ENCODE measurements at regions of chr1 and their contacts with region 1.

Region 1: DNA sequence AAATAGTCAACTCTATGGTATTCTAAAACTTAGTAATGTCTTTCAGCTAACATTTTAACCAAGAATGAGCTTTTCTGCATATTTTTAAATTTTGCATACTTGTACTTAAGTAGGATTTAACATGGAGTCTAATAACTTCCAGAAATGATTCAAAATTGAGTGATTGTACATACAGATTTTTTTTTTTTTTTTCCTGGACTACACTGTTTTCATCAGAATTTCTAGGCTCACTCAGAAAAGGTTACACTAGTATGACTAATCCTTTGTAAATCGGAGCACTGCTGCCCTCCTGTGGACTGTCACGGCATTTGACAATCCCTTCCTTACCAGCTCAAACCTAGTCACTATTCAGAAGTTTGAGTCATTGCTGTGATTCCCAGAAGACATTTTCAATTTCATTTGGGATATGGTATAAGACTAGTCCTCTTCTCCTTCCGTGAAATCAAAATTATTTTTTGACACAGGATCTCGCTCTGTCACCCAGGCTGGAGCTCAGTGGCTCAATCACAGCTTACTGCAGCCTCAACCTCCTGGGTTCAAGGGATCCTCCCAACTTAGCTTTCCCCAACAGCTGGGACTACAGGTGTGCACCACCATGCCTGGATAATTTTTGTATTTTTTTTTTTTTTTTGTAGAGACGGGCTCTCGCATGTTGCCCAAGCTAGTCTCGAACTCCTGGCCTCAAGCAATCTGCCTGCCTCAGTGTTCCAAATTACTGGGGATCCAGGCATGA is 45.5 kb downstream of the CD46 start:
- DNase-seq: peak; percentile 81
- ATAC-seq: peak; percentile 84
- H3K4me3 Mint-ChIP-seq: no peak overlapping the region
- H3K27ac Mint-ChIP-seq: no peak overlapping the region
- H3K4me1 Mint-ChIP-seq: peaks cover 8% of the 10 kb centered on the region
- H3K27me3 Mint-ChIP-seq: no peaks in the 10 kb centered on the region
- CTCF ChIP-seq: peak; percentile 46

Region 2: GRCh38 chr1:207698822-207699483 is 98.4 kb before region 1 on chr1:
- CTCF ChIA-PET with region 1: interaction called, 16 read pairs
- POLR2A ChIA-PET with region 1: no interaction called
- DNase-seq: peak; percentile 61
- ATAC-seq: peak; percentile 91
- H3K4me3 Mint-ChIP-seq: no peak overlapping the region
- H3K27ac Mint-ChIP-seq: peak overlapping the region; percentile 46
- H3K4me1 Mint-ChIP-seq: peaks cover 11% of the 10 kb centered on the region
- H3K27me3 Mint-ChIP-seq: no peaks in the 10 kb centered on the region
- CTCF ChIP-seq: no peak; the same call in 1 of the 2 replicates

Region 3: GRCh38 chr1:207711285-207711684 is 86.1 kb before region 1 on chr1:
- CTCF ChIA-PET with region 1: interaction called, 12 read pairs
- POLR2A ChIA-PET with region 1: no interaction called
- DNase-seq: peak; percentile 22
- ATAC-seq: peak; percentile 87
- H3K4me3 Mint-ChIP-seq: no peak overlapping the region
- H3K27ac Mint-ChIP-seq: 0 out of 2 replicates have a peak overlapping the region, but pooled peaks have one; percentile 6
- H3K4me1 Mint-ChIP-seq: peaks cover 16% of the 10 kb centered on the region
- H3K27me3 Mint-ChIP-seq: no peaks in the 10 kb centered on the region
- CTCF ChIP-seq: no peak

Region 4: GRCh38 chr1:207811920-207812720 is 14.7 kb after region 1 on chr1:
- CTCF ChIA-PET with region 1: interaction called, 15 read pairs
- POLR2A ChIA-PET with region 1: no interaction called
- DNase-seq: peak; percentile 55
- ATAC-seq: peak; percentile 88
- H3K4me3 Mint-ChIP-seq: no peak overlapping the region
- H3K27ac Mint-ChIP-seq: no peak overlapping the region
- H3K4me1 Mint-ChIP-seq: peaks cover 10% of the 10 kb centered on the region
- H3K27me3 Mint-ChIP-seq: no peaks in the 10 kb centered on the region
- CTCF ChIP-seq: no peak

Region 5: GRCh38 chr1:207822602-207823451 is 25.4 kb after region 1 on chr1:
- CTCF ChIA-PET with region 1: interaction called, 11 read pairs
- POLR2A ChIA-PET with region 1: no interaction called
- DNase-seq: no peak
- ATAC-seq: peak; percentile 62
- H3K4me3 Mint-ChIP-seq: no peak overlapping the region
- H3K27ac Mint-ChIP-seq: peak overlapping the region; percentile 12; the same call in 1 of the 2 replicates
- H3K4me1 Mint-ChIP-seq: peaks cover 19% of the 10 kb centered on the region
- H3K27me3 Mint-ChIP-seq: no peaks in the 10 kb centered on the region
- CTCF ChIP-seq: no peak

Region 6: GRCh38 chr1:207828485-207829158 is 31.2 kb after region 1 on chr1:
- CTCF ChIA-PET with region 1: interaction called, 11 read pairs
- POLR2A ChIA-PET with region 1: no interaction called
- DNase-seq: peak; percentile 70
- ATAC-seq: peak; percentile 95
- H3K4me3 Mint-ChIP-seq: no peak overlapping the region
- H3K27ac Mint-ChIP-seq: no peak overlapping the region
- H3K4me1 Mint-ChIP-seq: peaks cover 7% of the 10 kb centered on the region
- H3K27me3 Mint-ChIP-seq: no peaks in the 10 kb centered on the region
- CTCF ChIP-seq: peak; percentile 45; the same call in 1 of the 2 replicates

Region 7: GRCh38 chr1:207848234-207848633 is 50.8 kb after region 1 on chr1:
- CTCF ChIA-PET with region 1: no interaction called
- POLR2A ChIA-PET with region 1: no interaction called
- DNase-seq: no peak
- ATAC-seq: no peak
- H3K4me3 Mint-ChIP-seq: no peak overlapping the region
- H3K27ac Mint-ChIP-seq: no peak overlapping the region
- H3K4me1 Mint-ChIP-seq: peaks cover 8% of the 10 kb centered on the region
- H3K27me3 Mint-ChIP-seq: no peaks in the 10 kb centered on the region
- CTCF ChIP-seq: no peak

Region 8: GRCh38 chr1:207876131-207876530 is 78.7 kb after region 1 on chr1:
- CTCF ChIA-PET with region 1: interaction called, 14 read pairs
- POLR2A ChIA-PET with region 1: no interaction called
- DNase-seq: peak; percentile 32
- ATAC-seq: peak; percentile 90
- H3K4me3 Mint-ChIP-seq: no peak overlapping the region
- H3K27ac Mint-ChIP-seq: no peak overlapping the region
- H3K4me1 Mint-ChIP-seq: peaks cover 7% of the 10 kb centered on the region
- H3K27me3 Mint-ChIP-seq: peaks cover 2% of the 10 kb centered on the region
- CTCF ChIP-seq: no peak

Measured in WTC11 (cell line).